ENCODE measurements at regions of chr10 and their contacts with region 1.

Region 1: DNA sequence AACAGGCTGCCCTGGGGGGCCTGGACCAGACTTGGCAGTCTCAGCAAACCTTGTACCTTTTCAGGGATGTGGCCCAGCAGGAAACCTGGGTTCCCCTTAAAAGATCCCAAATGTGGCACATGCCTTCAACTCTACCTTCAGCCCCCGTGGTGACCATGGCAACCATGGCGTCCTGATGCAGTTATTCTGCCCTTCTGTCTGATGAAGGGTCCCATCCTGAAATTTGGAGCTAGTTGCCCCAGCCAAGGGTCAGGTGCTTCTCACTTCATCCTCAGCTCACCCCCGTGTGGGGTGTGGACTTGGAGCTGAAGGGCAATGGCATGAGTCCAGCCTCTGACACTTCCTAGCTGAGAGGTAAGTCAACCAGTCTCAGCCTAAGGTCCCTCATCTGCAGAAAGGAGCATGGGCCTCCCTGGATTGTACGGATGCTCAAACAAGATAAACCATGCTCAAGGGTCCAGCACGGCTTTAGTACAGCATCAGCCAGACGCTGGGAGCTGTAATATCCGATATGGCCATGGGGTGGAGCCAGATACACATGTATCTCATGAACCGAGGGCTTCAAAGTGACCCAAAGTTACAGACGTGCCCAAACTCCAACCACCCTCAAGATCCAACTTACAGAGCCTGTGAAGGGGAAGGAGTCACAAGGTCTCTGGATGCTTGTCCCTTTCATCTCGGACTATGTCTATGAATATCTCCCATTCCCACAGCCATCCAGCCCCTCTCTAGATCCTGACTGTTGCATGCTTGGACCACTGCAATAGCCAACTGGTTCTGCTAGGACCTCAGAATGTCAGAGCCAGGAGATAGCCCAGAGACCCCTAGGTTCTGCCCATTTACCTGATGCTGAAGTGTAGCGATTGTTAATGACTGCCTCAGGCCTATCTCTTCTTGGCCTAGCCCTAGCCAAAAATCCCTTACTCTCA is 142.5 kb downstream of the SH3PXD2A start:
- DNase-seq: peak; percentile 86
- H3K4me3 Mint-ChIP-seq: no peak overlapping the region
- H3K27ac Mint-ChIP-seq: no peak overlapping the region
- H3K4me1 Mint-ChIP-seq: peaks cover 14% of the 10 kb centered on the region
- H3K27me3 Mint-ChIP-seq: no peaks in the 10 kb centered on the region

Region 2: DNA sequence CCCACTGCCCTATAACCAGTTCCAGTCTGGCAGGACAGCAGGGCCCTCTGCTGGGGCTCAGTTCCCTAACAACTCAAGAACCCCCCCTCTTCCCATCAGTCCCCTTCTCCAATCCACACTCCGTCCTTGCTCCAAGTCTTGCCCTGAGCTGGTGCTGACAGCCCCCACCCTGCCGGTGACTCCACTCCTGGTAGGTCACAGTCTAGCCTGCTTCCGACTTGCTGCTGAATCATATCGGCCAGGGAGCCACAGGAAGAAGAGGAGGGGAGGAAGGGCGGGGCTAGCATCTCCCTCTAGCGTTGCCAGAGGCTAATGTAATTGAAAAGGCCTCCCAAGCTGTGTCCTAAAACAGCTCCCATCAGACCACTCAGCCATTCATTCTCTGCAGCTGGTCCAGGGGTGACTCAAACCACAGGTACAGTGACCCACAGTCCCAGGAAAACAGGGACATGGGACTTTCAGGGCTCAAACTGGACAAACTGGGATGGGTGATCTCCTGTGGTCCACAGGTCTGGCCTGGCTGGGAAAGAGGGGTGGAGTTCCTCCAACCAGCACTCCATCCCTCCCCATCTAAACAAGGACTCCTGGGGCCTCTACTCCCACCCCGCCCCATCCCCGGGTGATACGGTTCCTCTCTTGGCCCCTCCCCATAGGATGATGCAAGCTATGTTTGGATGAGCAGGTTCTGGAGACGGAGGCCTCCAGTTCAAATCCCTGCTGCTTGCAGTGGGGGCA is 16.3 kb before region 1 on chr10:
- CTCF ChIA-PET with region 1: interaction called, 23 read pairs
- POLR2A ChIA-PET with region 1: no interaction called
- DNase-seq: peak; percentile 89
- H3K4me3 Mint-ChIP-seq: peak overlapping the region; percentile 54
- H3K27ac Mint-ChIP-seq: peak overlapping the region; percentile 75
- H3K4me1 Mint-ChIP-seq: peaks cover 49% of the 10 kb centered on the region
- H3K27me3 Mint-ChIP-seq: no peaks in the 10 kb centered on the region

Region 3: DNA sequence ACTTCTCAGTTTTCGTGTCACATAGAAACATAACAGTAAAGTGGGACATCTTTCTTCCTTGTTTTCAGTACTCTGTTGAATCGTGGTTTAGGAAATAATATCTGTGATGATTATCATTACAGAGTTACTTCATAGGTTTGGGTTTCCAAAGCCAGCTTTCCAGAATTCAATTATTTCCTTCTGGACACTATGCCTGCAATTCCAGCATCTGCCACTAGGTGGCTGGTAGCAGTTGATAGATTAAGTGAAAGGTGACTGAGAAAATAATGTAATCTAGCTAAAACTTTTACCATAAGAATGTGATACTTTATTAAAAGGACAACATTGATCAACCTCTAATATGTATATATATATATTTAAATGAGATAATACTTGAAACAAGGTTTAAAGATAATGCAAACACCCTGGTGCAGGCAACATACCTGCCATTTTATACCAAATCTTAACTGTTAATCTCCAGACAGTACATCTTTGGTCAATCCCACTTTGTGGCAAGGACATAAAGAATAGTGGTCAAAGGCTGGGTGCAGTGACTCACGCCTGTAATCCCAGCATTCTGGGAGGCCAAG is 39.9 kb after region 1 on chr10:
- CTCF ChIA-PET with region 1: interaction called, 13 read pairs
- POLR2A ChIA-PET with region 1: no interaction called
- DNase-seq: peak; percentile 29
- H3K4me3 Mint-ChIP-seq: no peak overlapping the region
- H3K27ac Mint-ChIP-seq: no peak overlapping the region
- H3K4me1 Mint-ChIP-seq: peaks cover 48% of the 10 kb centered on the region
- H3K27me3 Mint-ChIP-seq: no peaks in the 10 kb centered on the region

Region 4: DNA sequence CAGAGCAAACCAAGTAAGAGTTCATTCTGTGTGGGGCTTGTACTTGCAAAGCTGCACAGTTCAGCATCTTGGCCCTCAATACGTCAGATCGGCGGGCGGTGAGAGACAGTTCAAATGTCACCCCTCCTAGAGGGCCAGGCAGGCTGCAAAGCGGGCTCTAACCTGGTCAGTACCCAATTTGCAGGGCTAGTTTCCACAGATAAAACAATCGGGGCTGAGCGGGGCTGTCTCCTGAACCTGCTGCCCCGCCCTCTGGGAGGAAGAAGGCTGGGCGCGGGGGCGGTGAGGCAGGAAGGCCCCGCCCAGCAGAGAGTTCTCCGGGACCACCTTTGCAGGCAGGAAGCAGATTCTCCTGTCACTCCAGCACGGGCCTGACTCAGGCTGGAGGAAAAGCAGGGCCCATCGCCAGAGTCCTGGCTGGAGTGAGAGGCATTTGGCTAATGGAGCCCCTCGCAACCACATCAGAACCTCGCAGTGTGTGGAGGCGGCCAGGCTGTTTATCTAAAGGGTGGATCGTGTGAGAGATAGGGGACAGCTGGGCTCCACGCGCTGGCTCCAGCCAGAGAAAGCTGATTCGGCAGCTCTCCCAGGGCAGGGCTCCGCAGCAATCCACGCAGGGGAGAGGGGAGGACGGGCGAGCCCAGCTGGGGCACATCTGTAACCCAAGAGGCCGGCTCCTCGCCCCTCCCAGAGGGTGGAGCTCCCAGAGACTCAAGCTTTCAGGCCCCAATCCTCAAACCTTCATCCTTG is 59.4 kb after region 1 on chr10:
- CTCF ChIA-PET with region 1: interaction called, 12 read pairs
- POLR2A ChIA-PET with region 1: interaction called, 4 read pairs
- DNase-seq: peak; percentile 78
- H3K4me3 Mint-ChIP-seq: peak overlapping the region; percentile 79
- H3K27ac Mint-ChIP-seq: peak overlapping the region; percentile 90
- H3K4me1 Mint-ChIP-seq: peaks cover 40% of the 10 kb centered on the region
- H3K27me3 Mint-ChIP-seq: peaks cover 6% of the 10 kb centered on the region

Region 5: DNA sequence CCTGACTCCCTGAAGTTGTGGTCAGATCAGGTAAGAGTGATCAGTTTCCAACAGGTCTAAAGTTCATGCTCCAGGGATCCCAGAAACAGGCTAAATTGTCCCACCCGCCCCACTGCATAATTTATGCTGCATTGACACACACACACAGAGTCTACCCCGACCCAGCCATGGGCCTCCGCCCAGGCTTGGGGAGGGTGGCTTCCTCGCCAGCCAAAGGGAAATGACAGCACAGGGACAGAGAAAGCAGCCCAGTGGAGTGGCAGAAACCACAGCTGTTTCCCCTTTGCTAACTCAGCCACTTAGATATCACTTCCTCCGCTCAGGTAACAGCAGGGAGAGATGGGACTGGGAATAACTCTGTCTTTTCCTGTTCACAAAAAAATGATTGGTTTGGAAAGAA is 133.1 kb after region 1 on chr10:
- CTCF ChIA-PET with region 1: interaction called, 45 read pairs
- POLR2A ChIA-PET with region 1: interaction called, 4 read pairs
- DNase-seq: peak; percentile 76
- H3K4me3 Mint-ChIP-seq: peak overlapping the region; percentile 18
- H3K27ac Mint-ChIP-seq: peak overlapping the region; percentile 85
- H3K4me1 Mint-ChIP-seq: peaks cover 46% of the 10 kb centered on the region
- H3K27me3 Mint-ChIP-seq: peaks cover 25% of the 10 kb centered on the region

Region 6: DNA sequence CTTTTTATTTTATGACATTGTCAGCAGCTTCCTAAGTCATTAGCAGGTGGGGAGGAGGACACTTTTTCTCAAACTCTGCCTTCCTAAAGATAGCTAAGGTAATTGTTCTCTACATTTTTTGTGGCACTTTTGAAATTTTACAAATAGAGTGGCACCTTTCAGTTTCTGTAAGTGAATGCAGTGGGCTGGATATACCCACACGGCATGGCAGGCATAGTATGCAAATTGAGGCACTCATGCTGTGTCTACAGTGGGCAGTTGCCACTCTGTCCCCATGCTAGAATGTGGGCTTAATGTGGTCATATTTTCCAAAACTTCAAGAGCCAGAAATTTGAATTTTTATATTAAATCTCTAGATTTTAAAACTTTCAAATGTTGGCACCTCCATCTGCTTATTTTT is 155.4 kb after region 1 on chr10:
- CTCF ChIA-PET with region 1: interaction called, 36 read pairs
- POLR2A ChIA-PET with region 1: no interaction called
- DNase-seq: no peak
- H3K4me3 Mint-ChIP-seq: no peak overlapping the region
- H3K27ac Mint-ChIP-seq: no peak overlapping the region
- H3K4me1 Mint-ChIP-seq: no peaks in the 10 kb centered on the region
- H3K27me3 Mint-ChIP-seq: peaks cover 1% of the 10 kb centered on the region